ENCODE measurements at regions of chr6 and their contacts with region 1.

Region 1: GRCh38 chr6:41719436-41720261 is 15.8 kb downstream of the TFEB start:
- DNase-seq: no peak
- H3K4me3 ChIP-seq: no peak overlapping the region
- CTCF ChIP-seq: no peak
- POLR2A ChIP-seq: no peak

Region 2: DNA sequence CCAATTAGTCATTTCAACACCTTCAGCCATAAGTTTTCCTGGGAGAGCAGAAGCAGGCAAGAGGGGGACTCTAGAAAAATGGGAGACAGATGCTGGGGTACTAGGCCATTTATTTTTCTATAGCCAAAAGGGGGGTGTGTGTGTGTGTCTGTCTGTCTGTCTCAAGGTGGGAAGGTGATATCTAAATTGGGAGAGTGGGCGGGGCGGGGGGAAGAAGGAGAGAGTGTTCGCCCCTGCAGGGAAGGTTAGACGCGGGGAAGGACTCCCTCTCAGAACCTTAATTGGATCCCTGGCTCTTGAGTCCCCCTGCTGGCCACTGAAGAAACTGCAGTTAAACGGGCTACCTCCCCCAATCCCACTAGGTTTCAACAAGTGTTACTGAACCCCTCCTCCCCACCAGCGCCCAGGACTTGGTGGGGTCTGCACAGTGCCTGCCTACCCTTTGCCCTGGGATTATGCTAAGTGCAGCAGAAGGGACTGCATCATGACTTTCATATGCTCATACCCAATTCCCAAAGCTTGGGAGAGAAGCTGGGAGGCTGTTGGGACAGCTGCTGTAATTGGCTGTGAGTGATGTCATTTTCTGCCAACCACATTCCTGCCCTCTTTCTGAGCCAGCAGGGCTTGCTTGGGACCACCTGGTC is 127.7 kb before region 1 on chr6:
- intact Hi-C with region 1: no loop called
- DNase-seq: peak; percentile 77 to 94
- H3K4me3 ChIP-seq: no peak overlapping the region
- CTCF ChIP-seq: no peak
- POLR2A ChIP-seq: no peak

Region 3: GRCh38 chr6:41675176-41675770 is 44.4 kb before region 1 on chr6:
- intact Hi-C with region 1: loop called (anchors 2 kb)
- DNase-seq: no peak
- H3K4me3 ChIP-seq: no peak overlapping the region
- CTCF ChIP-seq: no peak
- POLR2A ChIP-seq: no peak

Region 4: DNA sequence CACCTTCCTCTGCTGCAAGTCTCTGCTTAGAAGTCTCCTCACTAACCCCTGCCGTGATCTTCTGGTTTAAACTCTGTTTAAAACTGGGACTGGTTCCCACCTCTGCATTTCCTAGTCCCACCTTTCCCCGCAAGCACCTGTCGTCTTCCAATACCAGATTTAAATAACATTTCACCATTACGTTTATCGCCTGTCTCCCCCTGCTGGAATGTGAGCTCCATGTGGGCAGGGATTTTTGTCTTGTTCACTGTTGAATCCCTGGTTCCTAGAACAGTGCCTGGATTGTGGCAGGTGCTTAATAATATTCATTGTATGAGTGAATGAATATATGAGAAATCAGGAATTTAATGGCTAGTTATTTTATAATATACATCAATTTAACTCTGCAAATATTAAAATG is 456.2 kb after region 1 on chr6:
- intact Hi-C with region 1: no loop called
- DNase-seq: no peak
- H3K4me3 ChIP-seq: no peak overlapping the region
- CTCF ChIP-seq: no peak
- POLR2A ChIP-seq: no peak